WTC11 (cell line): ENCODE measurements at regions of chr12 and their contacts with region 1.

Region 1: DNA sequence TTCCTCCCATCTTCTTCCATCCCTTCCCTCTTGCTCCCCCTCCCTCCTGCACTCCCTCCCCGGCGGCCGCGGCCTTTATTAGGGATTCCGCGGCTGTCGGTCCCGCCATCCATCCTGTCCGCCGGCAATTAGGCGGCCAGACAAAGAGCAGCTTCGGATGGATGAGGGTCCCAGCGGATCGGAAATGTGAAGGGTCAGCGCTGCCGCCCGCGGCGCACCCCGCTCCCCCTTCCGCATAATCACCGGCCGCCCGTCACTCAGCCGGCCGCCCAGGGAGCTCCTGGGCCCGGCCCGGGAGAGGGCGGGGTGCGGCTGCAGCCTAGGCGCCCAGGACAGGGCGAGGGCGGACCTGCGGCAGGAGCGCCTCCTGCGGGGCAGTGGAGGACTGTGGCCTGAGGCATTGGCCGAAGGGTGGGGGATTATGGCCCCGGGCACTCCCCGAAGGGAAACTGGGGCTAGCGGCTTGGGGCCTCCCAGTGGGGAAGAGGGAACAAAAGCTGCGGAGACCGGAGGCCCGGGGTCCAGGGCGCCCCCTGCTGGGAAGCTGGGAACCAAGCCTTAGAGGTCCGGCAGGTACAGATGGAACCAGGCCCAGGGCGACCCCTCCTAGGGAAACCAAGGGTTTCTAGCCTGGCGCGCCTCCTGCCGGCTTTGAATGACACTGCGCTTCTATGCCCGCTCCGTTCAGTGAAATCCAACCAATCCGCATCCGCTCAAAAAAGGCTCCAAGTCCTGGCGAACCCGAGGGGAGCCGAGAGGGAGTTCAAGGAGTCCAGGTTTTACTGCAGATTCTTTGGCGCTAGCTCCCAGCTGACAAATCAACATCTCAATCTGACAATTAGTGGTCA is 4.4 kb upstream of the DNAJC22 start:
- DNase-seq: peak; percentile 96
- ATAC-seq: peak; percentile 74
- H3K4me3 Mint-ChIP-seq: peak overlapping the region; percentile 67
- H3K27ac Mint-ChIP-seq: no peak overlapping the region
- H3K4me1 Mint-ChIP-seq: peaks cover 59% of the 10 kb centered on the region
- H3K27me3 Mint-ChIP-seq: peaks cover 99% of the 10 kb centered on the region
- CTCF ChIP-seq: peak; percentile 92

Region 2: DNA sequence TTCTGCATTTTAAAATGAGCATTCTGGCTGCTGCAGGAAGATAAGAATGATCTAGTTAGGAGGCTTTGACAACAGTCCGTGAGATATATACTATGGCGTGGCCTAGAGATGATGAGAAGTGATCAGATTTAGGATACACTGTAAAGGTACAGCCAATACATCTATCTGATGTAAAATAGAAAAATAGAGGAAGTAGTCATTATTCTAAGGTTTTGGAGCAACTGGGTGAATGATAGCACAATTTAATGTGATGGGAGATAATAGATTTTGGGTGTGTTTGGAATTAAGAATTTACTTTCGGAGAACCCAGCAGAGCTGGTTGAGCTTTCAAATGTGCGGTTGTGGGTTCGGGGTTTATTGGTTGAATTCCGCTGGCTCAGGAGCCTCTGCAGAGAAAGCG is 870.0 kb before region 1 on chr12 and contains the start of gene ANP32D:
- CTCF ChIA-PET with region 1: no interaction called
- POLR2A ChIA-PET with region 1: no interaction called
- DNase-seq: no peak
- ATAC-seq: no peak
- H3K4me3 Mint-ChIP-seq: no peak within 1 kb of the TSS
- H3K27ac Mint-ChIP-seq: no peak within 1 kb of the TSS
- H3K4me1 Mint-ChIP-seq: no peaks in the 10 kb centered on the region
- H3K27me3 Mint-ChIP-seq: peaks cover 46% of the 10 kb centered on the region
- CTCF ChIP-seq: no peak
- total RNA-seq, gene ANP32D: not detected in 3 replicates

Region 3: GRCh38 chr12:49288412-49288853 is 53.9 kb before region 1 on chr12:
- CTCF ChIA-PET with region 1: interaction called, 264 read pairs
- POLR2A ChIA-PET with region 1: interaction called, 9 read pairs
- DNase-seq: peak; percentile 76
- ATAC-seq: peak; percentile 48
- H3K4me3 Mint-ChIP-seq: no peak overlapping the region
- H3K27ac Mint-ChIP-seq: no peak overlapping the region
- H3K4me1 Mint-ChIP-seq: peaks cover 17% of the 10 kb centered on the region
- H3K27me3 Mint-ChIP-seq: peaks cover 59% of the 10 kb centered on the region
- CTCF ChIP-seq: peak; percentile 80

Region 4: GRCh38 chr12:49358483-49359141 is 16.3 kb after region 1 on chr12:
- CTCF ChIA-PET with region 1: interaction called, 101 read pairs
- POLR2A ChIA-PET with region 1: no interaction called
- DNase-seq: peak; percentile 67
- ATAC-seq: peak; percentile 99
- H3K4me3 Mint-ChIP-seq: no peak overlapping the region
- H3K27ac Mint-ChIP-seq: no peak overlapping the region
- H3K4me1 Mint-ChIP-seq: no peaks in the 10 kb centered on the region
- H3K27me3 Mint-ChIP-seq: peaks cover 3% of the 10 kb centered on the region; the same call in 1 of the 2 replicates
- CTCF ChIP-seq: peak; percentile 65

Region 5: GRCh38 chr12:49482095-49483051 is 140.1 kb after region 1 on chr12:
- CTCF ChIA-PET with region 1: interaction called, 15 read pairs
- POLR2A ChIA-PET with region 1: no interaction called
- DNase-seq: no peak
- ATAC-seq: peak; percentile 58; the same call in 1 of the 2 replicates
- H3K4me3 Mint-ChIP-seq: no peak overlapping the region
- H3K27ac Mint-ChIP-seq: peak overlapping the region; percentile 81
- H3K4me1 Mint-ChIP-seq: peaks cover 56% of the 10 kb centered on the region
- H3K27me3 Mint-ChIP-seq: no peaks in the 10 kb centered on the region
- CTCF ChIP-seq: no peak

Region 6: GRCh38 chr12:49553512-49554088 is 211.3 kb after region 1 on chr12:
- CTCF ChIA-PET with region 1: interaction called, 39 read pairs
- POLR2A ChIA-PET with region 1: no interaction called
- DNase-seq: no peak
- ATAC-seq: peak; percentile 62
- H3K4me3 Mint-ChIP-seq: no peak overlapping the region
- H3K27ac Mint-ChIP-seq: no peak overlapping the region
- H3K4me1 Mint-ChIP-seq: peaks cover 3% of the 10 kb centered on the region; the same call in 1 of the 2 replicates
- H3K27me3 Mint-ChIP-seq: peaks cover 33% of the 10 kb centered on the region
- CTCF ChIP-seq: no peak